Activated CD4-positive, alpha-beta T cell treated with anti-CD3 and anti-CD28 coated beads, Interleukin-2, amount 10 ng/mL, durations not matched to agents 24 days and 14 days (primary cell): ENCODE measurements at regions of chr19 and their contacts with region 1.

Region 1: DNA sequence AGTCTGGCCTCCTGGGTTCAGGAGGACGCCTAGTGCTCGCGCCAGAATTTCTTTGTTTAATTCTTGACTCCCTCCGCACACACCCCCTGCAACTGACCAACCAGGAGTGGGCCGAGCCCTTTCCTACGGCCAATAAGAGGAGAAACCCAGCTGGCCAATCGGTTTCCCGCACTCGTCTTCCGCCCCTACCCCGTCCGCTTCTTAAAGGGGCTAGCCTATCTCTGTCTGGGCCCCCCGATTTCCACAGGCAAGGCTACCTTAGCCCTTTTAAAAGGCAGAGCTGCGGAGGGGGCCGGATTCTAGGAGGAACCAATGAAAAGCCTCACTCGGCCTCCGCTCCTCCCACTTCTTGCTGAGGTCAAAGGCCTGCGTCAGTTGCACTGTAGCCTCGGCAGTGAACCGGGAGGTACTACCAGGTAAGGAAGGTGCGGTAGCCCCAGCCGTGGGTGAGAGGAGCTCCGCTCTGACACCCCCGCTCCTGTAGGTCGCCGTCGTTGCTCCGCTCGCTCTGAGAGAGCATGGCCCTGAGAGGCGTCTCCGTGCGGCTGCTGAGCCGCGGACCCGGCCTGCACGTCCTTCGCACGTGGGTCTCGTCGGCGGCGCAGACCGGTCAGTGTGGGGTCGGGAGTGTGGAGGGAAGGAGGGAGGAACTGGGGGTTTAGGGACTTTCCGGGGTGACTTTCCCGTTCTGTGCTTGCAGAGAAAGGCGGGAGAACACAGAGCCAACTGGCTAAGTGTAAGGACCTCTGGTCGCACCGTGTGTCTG is at the start of gene GCDH:
- DNase-seq: peak; percentile 98
- H3K4me3 Mint-ChIP-seq: peak within 1 kb of the TSS; percentile 99
- H3K27ac Mint-ChIP-seq: peak within 1 kb of the TSS; percentile 90
- H3K4me1 Mint-ChIP-seq: peaks cover 24% of the 10 kb centered on the region
- H3K27me3 Mint-ChIP-seq: peaks cover 7% of the 10 kb centered on the region
- total RNA-seq, gene GCDH: 66.9 and 71.6 TPM in 2 replicates

Region 2: GRCh38 chr19:12745166-12745897 is 145.6 kb before region 1 on chr19:
- intact Hi-C with region 1: no loop called
- DNase-seq: no peak
- H3K4me3 Mint-ChIP-seq: no peak overlapping the region
- H3K27ac Mint-ChIP-seq: no peak overlapping the region
- H3K4me1 Mint-ChIP-seq: peaks cover 4% of the 10 kb centered on the region
- H3K27me3 Mint-ChIP-seq: peaks cover 4% of the 10 kb centered on the region

Region 3: DNA sequence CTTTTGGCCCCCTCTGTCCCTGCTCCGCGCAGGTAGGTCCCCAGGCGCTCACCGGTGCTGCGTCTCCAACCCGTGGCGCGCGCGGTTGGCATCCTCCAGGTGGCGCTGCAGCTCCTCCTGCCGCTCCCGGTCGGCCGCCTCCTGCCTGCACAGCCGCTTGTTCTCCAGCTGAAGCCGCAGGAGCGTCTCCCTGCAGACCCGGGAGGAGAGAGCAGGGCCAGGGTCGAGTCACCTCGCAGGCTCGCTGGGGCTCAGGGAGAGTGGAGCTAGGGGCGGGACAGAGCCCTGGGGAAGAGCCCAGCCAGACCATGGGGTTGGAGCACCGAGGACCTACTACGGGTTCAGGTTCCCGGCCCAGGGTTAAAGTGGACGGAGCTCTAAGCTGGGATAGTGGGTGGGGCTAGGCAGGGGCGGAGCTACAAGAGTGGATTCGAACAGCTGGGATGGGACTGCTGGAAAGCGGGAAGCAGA is 124.9 kb before region 1 on chr19:
- intact Hi-C with region 1: no loop called
- DNase-seq: peak; percentile 96
- H3K4me3 Mint-ChIP-seq: peak overlapping the region; percentile 70
- H3K27ac Mint-ChIP-seq: no peak overlapping the region
- H3K4me1 Mint-ChIP-seq: peaks cover 3% of the 10 kb centered on the region
- H3K27me3 Mint-ChIP-seq: no peaks in the 10 kb centered on the region

Region 4: GRCh38 chr19:12918271-12918670 is 27.3 kb after region 1 on chr19:
- intact Hi-C with region 1: loop called (anchors 2 kb)
- DNase-seq: no peak
- H3K4me3 Mint-ChIP-seq: peak overlapping the region; percentile 80
- H3K27ac Mint-ChIP-seq: peak overlapping the region; percentile 95
- H3K4me1 Mint-ChIP-seq: peaks cover 30% of the 10 kb centered on the region
- H3K27me3 Mint-ChIP-seq: peaks cover 2% of the 10 kb centered on the region

Region 5: DNA sequence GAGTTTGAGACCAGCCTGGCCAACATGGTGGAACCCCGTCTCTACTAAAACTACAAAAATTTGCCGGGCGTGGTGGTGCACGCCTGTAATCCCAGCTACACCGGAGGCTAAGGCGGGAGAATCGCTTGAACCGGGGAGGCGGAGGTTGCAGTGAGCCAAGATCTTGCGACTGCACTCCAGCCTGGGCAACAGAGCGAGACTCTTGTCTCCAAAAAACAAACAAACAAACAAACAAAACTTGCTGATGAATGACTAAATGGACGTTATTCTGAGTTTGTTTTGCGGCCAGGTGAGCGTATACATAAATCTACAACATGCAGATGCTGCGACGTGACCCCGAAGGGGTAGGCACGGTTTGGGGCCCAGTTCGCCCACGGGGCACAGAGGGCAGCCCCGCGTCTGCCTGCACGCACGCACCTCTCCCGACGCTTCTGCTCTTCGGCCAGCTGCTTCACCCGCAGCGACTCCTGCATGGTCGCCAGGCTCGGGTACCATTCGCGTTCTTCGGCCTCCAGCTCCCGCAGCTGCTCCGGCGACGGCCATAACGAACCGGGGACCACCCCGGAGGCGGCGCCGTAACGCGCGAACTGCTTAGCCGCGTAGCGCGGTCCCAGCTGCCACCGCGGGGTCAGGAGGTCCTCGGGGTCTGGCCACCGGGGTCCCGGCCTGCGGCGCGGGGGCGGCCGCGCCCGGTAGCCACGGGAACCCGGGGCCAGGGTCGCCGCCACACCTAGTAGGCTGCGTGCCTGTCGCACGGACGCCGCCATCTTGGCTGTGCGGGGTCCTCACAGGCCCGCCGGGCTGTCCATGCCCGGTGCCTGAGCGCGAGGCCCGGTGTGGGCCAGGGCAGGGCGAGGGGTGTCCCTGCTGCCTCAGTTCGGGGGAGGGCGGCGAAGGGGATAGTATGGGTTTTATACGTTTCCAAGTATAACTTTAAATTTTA is 65.7 kb after region 1 on chr19 and contains the start of gene GADD45GIP1:
- intact Hi-C with region 1: loop called (anchors 2 kb)
- DNase-seq: peak; percentile 96
- H3K4me3 Mint-ChIP-seq: peak within 1 kb of the TSS; percentile 75
- H3K27ac Mint-ChIP-seq: peak within 1 kb of the TSS; percentile 95
- H3K4me1 Mint-ChIP-seq: peaks cover 25% of the 10 kb centered on the region
- H3K27me3 Mint-ChIP-seq: peaks cover 1% of the 10 kb centered on the region
- total RNA-seq, gene GADD45GIP1: 32.4 and 34.4 TPM in 2 replicates

Region 6: GRCh38 chr19:13718733-13719132 is 827.8 kb after region 1 on chr19:
- intact Hi-C with region 1: no loop called
- DNase-seq: no peak
- H3K4me3 Mint-ChIP-seq: no peak overlapping the region
- H3K27ac Mint-ChIP-seq: no peak overlapping the region
- H3K4me1 Mint-ChIP-seq: no peaks in the 10 kb centered on the region
- H3K27me3 Mint-ChIP-seq: peaks cover 11% of the 10 kb centered on the region